Esophagus squamous epithelium (tissue), 5 donors: ENCODE measurements at regions of chr21 and their contacts with region 1.

Region 1: DNA sequence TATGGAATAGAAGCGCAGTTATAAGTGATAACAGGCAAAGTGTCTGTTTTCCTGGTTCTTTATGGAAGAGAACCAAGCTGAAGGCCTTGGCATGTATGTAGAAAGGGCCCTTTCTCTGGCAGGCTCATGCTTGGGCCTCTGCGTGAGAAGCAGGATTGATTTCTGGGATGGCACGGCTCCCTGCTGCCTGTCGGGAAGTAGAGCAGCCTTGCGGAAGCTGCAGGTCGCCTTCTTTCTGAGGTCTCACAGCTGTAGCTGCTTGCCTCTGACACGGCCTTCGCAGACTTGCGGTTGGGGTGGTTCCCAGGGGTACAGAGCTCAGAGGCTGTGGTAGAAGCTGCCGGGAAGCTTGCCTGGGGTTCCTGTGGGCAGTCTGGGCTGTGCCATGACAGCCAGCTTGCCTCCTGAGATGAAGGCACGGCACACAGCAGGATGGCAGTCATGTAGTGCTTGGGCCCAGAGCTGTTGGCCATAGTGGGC is 39.4 kb downstream of the TRAPPC10 start:
- DNase-seq: no peak
- H3K4me3 ChIP-seq: no peak overlapping the region
- H3K27ac ChIP-seq: peak overlapping the region in 3 of 4 donors; percentile 48 to 73 (median 62)
- H3K4me1 ChIP-seq: peaks cover 0 to 23% (median 6%) of the 10 kb centered on the region in 3 donors
- H3K27me3 ChIP-seq: no peaks in the 10 kb centered on the region
- CTCF ChIP-seq: no peak
- POLR2A ChIP-seq: no peak

Region 2: GRCh38 chr21:43916691-43917514 is 134.6 kb before region 1 on chr21:
- intact Hi-C with region 1: no loop called
- DNase-seq: no peak
- H3K4me3 ChIP-seq: peak overlapping the region in 3 of 4 donors; percentile 36 to 52 (median 37)
- H3K27ac ChIP-seq: peak overlapping the region in 2 of 4 donors; percentile 46 to 50
- H3K4me1 ChIP-seq: peaks cover 0 to 42% (median under 1%) of the 10 kb centered on the region in 3 donors
- H3K27me3 ChIP-seq: no peaks in the 10 kb centered on the region
- CTCF ChIP-seq: no peak
- POLR2A ChIP-seq: no peak

Region 3: DNA sequence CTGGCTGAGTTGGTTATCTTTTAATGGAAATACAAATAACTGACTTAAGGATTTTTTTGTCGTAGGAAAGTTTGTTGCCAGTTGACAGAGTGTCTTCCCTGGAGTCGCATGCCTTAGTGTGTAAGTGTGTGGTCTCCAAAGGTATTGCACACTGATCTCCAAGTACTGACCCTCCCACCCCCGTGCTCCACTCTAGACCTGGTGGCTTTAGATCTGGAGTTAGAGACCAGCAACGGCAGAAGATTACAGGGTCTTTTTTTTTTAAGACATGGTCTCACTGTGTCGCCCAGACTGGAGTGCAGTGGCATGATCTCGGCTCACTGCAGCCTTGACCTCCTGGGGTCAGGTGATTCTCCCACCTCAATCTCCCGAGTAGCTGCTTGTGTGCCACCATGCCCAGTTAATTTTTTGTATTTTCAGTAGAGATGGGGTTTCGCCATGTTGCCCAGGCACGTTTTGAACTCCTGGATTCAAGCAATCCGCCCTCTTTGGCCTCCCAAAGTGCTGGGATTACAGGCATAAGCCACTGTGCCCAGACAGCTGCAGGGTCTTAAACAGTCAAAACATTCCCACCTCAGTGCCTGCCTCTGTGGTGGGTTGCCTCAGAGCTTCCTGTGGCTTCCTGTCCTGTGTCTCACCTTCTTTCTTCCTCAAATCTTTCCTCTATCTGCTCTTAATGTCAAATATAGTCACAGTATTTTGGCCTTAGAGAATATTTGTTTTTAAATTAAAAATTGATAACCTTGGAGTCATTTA is 32.5 kb before region 1 on chr21:
- intact Hi-C with region 1: loop called (anchors 5 kb)
- DNase-seq: no peak
- H3K4me3 ChIP-seq: no peak overlapping the region
- H3K27ac ChIP-seq: no peak overlapping the region
- H3K4me1 ChIP-seq: peaks cover 8 to 73% (median 10%) of the 10 kb centered on the region in 3 donors
- H3K27me3 ChIP-seq: no peaks in the 10 kb centered on the region
- CTCF ChIP-seq: no peak
- POLR2A ChIP-seq: no peak

Region 4: DNA sequence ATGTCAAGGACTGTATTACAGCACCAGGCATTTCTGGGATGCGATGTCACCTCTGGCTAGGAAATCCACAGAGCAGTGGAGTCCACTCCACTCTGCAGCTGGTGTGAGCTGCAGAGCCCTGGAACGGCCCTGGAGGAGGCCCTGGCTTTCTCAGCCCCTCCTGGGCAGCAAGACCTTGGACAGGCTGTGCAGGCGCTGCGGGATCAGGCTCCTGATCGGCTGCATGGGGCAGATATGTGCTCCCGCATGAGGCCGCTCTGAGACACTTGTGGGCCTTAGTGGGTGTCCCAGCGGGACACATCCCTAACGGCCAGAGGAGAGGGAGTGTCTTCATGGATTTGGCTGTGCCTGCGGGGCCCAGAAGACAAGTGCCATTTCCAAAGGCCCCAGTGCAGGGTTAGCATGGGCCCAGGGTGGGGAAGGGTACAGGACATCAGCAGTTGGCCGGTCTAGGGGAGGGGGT is 204.0 kb after region 1 on chr21:
- intact Hi-C with region 1: no loop called
- DNase-seq: no peak
- H3K4me3 ChIP-seq: no peak overlapping the region
- H3K27ac ChIP-seq: no peak overlapping the region
- H3K4me1 ChIP-seq: peaks cover 0 to 16% (median 0%) of the 10 kb centered on the region in 3 donors
- H3K27me3 ChIP-seq: peaks cover 0 to 30% (median 0%) of the 10 kb centered on the region in 4 donors
- CTCF ChIP-seq: no peak
- POLR2A ChIP-seq: no peak

Region 5: DNA sequence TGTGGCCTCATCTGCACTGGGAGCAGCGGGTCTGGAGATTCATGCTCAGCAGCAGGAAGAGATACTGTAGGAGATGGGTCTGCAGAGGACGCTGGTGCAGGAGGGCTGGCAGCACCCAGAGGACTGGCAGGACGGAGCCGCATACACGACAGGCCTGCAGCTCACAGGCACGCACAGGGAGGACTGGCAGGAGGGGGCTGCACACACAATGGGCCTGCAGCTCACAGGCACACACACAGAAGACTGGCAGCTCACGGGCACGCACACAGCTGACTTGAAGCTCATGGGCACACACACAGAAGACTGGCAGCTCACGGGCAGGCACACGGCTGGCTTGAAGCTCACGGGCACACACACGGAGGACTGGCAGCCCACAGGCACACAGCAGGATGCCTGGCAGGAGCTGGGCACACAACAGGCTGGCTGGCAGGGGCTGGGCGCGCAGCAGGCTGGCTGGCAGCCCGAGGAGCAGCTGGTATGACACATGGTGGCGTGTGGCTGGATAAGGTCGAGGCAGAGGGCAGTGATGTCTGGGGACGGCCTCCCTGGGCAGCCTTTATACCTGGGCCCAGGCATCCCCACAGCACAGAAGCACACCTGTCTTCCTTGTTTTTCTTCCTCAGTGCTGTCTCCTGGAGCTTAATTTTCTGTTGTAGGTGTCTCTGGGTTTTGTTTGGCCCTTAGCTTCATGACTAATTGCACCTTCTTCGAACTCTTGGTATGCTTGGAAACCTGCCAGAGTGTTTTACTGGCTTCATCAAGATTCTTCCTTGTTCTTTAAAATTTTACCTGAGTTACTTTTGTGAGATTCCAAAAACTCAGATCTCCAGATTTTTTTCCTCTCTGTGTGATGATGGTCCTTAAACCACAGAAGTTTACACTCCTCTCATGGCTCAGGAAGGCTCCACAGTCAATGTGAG is 615.2 kb after region 1 on chr21 and contains the start of gene KRTAP12-2:
- intact Hi-C with region 1: no loop called
- DNase-seq: no peak
- H3K4me3 ChIP-seq: no peak within 1 kb of the TSS
- H3K27ac ChIP-seq: no peak within 1 kb of the TSS
- H3K4me1 ChIP-seq: no peaks in the 10 kb centered on the region
- H3K27me3 ChIP-seq: peaks cover 0 to 35% (median 0%) of the 10 kb centered on the region in 4 donors
- CTCF ChIP-seq: no peak
- POLR2A ChIP-seq: no peak
- total RNA-seq, gene KRTAP12-2: not detected